WTC11 (cell line): ENCODE measurements at regions of chr10 and their contacts with region 1.

Region 1: GRCh38 chr10:43683451-43684291 is 35.0 kb upstream of the ZNF32 start:
- DNase-seq: peak; percentile 71
- ATAC-seq: peak; percentile 98
- H3K4me3 Mint-ChIP-seq: no peak overlapping the region
- H3K27ac Mint-ChIP-seq: no peak overlapping the region
- H3K4me1 Mint-ChIP-seq: peaks cover 6% of the 10 kb centered on the region; the same call in 1 of the 2 replicates
- H3K27me3 Mint-ChIP-seq: peaks cover 23% of the 10 kb centered on the region
- CTCF ChIP-seq: peak; percentile 48

Region 2: DNA sequence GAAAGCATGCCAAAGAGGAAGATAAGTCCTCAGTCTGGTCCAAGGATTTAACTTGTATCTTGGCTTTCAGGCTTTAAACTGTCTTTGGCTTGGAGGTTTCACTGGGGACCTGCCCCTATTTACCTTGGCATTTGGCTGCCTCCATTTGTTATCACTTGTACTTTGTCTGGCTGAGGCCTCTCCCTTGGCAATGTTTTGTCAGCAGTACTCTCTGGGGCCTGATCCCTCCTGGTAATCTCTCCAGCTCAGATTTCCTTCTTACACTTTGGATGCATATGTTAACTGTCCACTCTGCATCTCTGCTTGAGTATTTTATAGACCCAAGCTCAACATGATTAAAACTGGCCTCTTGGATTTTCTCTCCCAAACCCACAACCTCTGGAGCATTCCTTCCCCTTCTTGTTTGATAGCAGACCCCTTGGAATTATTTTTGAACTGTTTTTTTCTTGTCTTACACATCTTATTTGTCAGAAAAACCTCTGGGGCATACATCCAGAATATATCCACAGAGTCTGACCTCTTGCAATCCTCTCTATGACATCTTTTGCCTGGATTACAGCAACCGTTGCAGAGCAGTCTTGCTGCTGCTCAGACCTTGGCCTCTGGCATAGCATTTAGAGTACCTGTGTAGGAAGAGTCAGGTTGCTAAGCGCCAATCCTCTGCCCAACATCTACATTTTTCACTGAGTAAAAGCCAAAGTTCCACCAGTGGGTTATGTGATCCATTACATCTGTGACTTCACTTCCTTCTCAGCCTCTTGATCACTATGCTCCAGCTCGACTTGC is 211.5 kb before region 1 on chr10:
- CTCF ChIA-PET with region 1: no interaction called
- POLR2A ChIA-PET with region 1: no interaction called
- DNase-seq: no peak
- ATAC-seq: no peak
- H3K4me3 Mint-ChIP-seq: no peak overlapping the region
- H3K27ac Mint-ChIP-seq: no peak overlapping the region
- H3K4me1 Mint-ChIP-seq: no peaks in the 10 kb centered on the region
- H3K27me3 Mint-ChIP-seq: no peaks in the 10 kb centered on the region; the same call in 1 of the 2 replicates
- CTCF ChIP-seq: no peak

Region 3: GRCh38 chr10:43671656-43672531 is 11.8 kb before region 1 on chr10:
- CTCF ChIA-PET with region 1: interaction called, 21 read pairs
- POLR2A ChIA-PET with region 1: no interaction called
- DNase-seq: peak; percentile 60
- ATAC-seq: peak; percentile 85
- H3K4me3 Mint-ChIP-seq: no peak overlapping the region
- H3K27ac Mint-ChIP-seq: no peak overlapping the region
- H3K4me1 Mint-ChIP-seq: peaks cover 13% of the 10 kb centered on the region
- H3K27me3 Mint-ChIP-seq: peaks cover 23% of the 10 kb centered on the region
- CTCF ChIP-seq: peak; percentile 73

Region 4: DNA sequence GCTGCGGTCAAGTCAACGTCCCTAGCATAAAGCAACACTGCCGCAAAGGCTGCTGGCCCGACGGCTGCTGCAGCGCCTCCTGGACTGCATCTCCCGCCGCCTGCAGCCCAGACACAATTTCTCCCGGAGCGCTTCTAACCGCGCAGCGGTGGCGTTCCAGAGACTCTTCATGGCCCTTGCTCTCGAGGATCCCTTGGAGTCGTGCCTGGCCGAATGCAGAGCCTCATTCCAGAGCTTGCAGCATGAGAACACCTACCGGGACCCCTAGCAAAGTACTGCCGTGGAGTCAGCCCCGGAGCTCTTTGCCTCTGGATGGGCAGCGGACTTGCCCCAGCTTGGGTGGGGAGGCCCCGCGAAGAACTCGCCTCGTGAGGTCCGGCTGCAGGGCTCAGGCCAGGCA is 44.8 kb after region 1 on chr10:
- CTCF ChIA-PET with region 1: no interaction called
- POLR2A ChIA-PET with region 1: no interaction called
- DNase-seq: no peak
- ATAC-seq: no peak; the same call in 1 of the 2 replicates
- H3K4me3 Mint-ChIP-seq: no peak overlapping the region
- H3K27ac Mint-ChIP-seq: no peak overlapping the region
- H3K4me1 Mint-ChIP-seq: no peaks in the 10 kb centered on the region
- H3K27me3 Mint-ChIP-seq: peaks cover 9% of the 10 kb centered on the region
- CTCF ChIP-seq: no peak